ENCODE measurements at regions of chr10 and their contacts with region 1.

Region 1: DNA sequence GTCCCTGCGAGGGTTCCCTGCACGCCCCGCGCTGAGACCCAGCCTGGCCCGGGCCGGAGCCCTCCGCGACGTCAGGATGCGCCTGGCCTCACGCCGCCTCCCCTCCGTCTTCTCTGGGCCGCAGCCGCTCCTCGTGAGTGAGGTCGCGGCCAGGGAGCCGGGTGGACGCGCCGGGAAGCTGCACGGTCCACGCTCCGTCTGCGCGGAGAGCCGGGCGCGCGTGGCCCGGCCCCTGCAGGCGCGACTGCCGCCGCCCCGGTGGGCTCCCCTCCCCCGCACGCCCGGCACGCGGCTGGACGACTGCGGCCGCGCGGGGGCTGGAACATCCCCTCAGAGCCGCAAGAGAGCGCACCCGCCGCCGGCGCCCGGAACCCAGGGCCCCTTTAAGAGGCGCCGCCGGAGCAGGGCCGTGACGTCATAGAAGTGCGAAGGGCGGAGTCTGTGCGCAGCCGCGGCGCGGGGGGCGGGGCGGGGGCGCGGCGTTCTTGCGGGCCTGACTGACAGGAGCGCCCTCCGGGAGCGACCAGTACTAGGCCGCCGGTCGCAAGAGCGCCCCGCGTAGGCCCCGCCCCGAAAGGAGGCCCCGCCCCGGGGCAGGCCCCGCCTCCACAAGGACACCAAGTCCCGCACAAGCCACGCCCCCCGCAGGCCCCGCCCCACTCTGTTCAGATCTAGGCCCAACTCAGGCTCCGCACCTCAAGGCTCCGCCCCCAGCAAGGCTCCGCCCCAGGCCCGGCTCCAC is 445 bp upstream of the INPP5A start:
- DNase-seq: peak; percentile 100
- H3K4me3 Mint-ChIP-seq: peak overlapping the region; percentile 73
- H3K27ac Mint-ChIP-seq: no peak overlapping the region
- H3K4me1 Mint-ChIP-seq: peaks cover 44% of the 10 kb centered on the region
- H3K27me3 Mint-ChIP-seq: peaks cover 11% of the 10 kb centered on the region

Region 2: GRCh38 chr10:132162021-132162531 is 375.1 kb before region 1 on chr10:
- intact Hi-C with region 1: loop called (anchors 2 kb)
- DNase-seq: peak; percentile 89
- H3K4me3 Mint-ChIP-seq: peak overlapping the region; percentile 83
- H3K27ac Mint-ChIP-seq: peak overlapping the region; percentile 99
- H3K4me1 Mint-ChIP-seq: peaks cover 41% of the 10 kb centered on the region
- H3K27me3 Mint-ChIP-seq: no peaks in the 10 kb centered on the region

Region 3: GRCh38 chr10:132307823-132308587 is 229.1 kb before region 1 on chr10 and contains the start of gene STK32C:
- intact Hi-C with region 1: loop called (anchors 1 kb)
- DNase-seq: peak; percentile 94
- H3K4me3 Mint-ChIP-seq: peak within 1 kb of the TSS; percentile 91
- H3K27ac Mint-ChIP-seq: peak within 1 kb of the TSS; percentile 82
- H3K4me1 Mint-ChIP-seq: peaks cover 5% of the 10 kb centered on the region
- H3K27me3 Mint-ChIP-seq: peaks cover 46% of the 10 kb centered on the region
- total RNA-seq, gene STK32C: 15.2 and 18.4 TPM in 2 replicates

Region 4: DNA sequence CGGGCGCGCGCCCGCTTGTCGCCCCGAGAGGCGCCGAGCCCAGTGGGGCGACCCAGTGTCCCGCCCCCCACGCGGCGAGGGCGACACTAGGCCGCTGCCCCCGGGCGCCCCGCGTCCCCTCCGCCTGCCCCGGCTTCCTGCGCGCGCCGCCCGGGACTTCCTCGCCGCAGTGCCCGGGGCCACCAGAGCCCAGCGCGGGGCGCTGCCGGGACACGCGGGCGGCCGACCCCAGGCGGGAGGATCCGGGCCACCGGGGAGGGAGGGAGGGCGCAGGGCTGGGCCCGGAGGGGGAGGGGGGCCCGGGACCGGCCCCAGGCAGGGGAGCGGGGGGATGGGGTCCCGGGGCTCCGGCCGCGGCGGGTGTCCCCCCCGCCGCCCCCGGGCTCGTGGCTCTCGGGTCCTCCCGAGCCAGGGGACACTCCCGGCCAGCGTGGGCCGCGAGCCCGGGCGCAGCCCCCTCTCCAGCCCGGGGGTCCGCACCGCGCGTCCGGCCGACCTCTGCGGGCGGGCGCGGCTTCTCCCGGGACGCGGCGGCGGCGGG is 140.6 kb before region 1 on chr10:
- intact Hi-C with region 1: loop called (anchors 10 kb)
- DNase-seq: peak; percentile 91
- H3K4me3 Mint-ChIP-seq: no peak overlapping the region
- H3K27ac Mint-ChIP-seq: no peak overlapping the region
- H3K4me1 Mint-ChIP-seq: peaks cover 9% of the 10 kb centered on the region
- H3K27me3 Mint-ChIP-seq: peaks cover 6% of the 10 kb centered on the region

Region 5: GRCh38 chr10:132551093-132551807 is 14.1 kb after region 1 on chr10:
- intact Hi-C with region 1: loop called (anchors 1 kb)
- DNase-seq: peak; percentile 81
- H3K4me3 Mint-ChIP-seq: peak overlapping the region; percentile 62
- H3K27ac Mint-ChIP-seq: peak overlapping the region; percentile 69
- H3K4me1 Mint-ChIP-seq: peaks cover 20% of the 10 kb centered on the region
- H3K27me3 Mint-ChIP-seq: no peaks in the 10 kb centered on the region

Region 6: DNA sequence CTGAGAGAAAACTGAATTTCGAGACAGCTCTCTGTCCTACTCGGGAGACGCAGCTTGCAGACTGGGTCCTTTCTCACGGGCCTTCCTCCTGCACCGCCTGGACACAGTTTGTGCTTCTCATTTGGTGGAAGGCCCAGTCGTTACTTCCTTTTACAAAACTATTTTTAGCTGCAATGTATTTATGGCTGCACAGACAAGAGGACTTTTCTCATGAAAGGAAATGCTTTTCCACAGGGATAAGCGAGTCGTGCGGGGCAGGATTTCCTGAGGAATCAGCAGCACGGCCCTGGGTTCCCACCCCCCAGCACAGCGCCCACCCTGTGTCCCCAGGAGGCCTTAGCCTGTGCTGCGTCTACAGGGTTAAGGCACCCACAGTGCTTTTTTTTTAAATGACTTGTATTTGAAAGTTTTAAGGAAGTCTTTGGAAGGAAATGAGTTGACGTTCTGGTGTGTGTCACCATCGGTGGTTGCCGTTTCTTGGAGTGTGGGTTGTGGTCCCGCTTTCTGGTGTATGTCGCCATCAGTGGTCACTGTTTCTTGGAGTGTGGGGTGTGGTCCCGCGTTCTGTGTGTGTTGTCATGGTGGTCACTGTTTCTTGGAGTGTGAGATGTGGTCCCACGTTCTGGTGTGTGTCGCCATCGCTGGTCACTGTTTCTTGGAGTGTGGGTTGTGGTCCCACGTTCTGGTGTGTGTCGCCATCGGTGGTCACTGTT is 51.3 kb after region 1 on chr10:
- intact Hi-C with region 1: loop called (anchors 1 kb)
- DNase-seq: peak; percentile 81
- H3K4me3 Mint-ChIP-seq: peak overlapping the region; percentile 44
- H3K27ac Mint-ChIP-seq: peak overlapping the region; percentile 60
- H3K4me1 Mint-ChIP-seq: peaks cover 35% of the 10 kb centered on the region
- H3K27me3 Mint-ChIP-seq: no peaks in the 10 kb centered on the region

Measured in activated CD4-positive, alpha-beta T cell treated with anti-CD3 and anti-CD28 coated beads, Interleukin-2, amount 10 ng/mL, durations not matched to agents 24 days and 14 days (primary cell).